Endothelial cell of umbilical vein (primary cell): ENCODE measurements at regions of chr13 and their contacts with region 1.

Region 1: DNA sequence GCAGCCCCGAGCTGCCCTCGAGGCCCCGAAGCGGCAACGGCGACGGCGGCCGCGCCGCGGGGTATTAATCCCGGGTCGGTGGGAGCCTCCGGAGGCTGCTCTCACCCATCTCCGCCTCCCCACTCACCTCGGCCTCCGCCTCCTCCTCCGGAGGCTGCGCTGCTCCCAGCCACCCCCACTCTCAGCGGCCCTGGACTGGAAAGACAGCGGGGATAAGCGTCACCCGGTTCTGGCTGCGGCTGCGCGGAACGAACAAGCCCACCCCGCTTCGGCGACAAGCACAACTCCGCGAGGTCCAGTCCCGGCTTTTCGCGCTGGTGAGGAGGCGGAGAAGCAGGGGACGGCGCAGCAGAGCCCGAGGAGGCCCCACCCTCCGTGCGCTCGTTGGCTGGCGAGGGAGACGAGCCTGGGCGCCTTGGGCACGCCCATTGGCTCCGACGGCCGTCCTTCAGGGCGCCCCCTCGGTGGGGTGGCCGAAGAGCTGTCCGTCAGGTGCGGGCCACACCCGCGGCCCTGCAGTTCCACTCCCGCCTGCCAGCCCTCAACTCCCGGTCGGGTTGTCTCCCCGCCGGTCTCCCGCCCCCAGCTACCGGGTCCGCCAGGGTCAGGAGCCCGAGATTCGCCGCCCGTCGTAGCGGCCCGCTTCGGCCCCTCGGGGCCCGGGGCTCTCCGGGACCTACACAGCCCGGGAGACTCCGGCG is at the start of gene ZMYM5:
- DNase-seq: peak; percentile 100
- H3K4me3 ChIP-seq: peak within 1 kb of the TSS; percentile 77 to 99 (median 91)
- H3K27ac ChIP-seq: peak within 1 kb of the TSS; percentile 81
- H3K4me1 ChIP-seq: peaks cover 30% of the 10 kb centered on the region
- H3K27me3 ChIP-seq: no peaks in the 10 kb centered on the region
- CTCF ChIP-seq: no peak
- POLR2A ChIP-seq: peak; percentile 21
- total RNA-seq, gene ZMYM5: 10.1 and 13.1 TPM in 2 replicates

Region 2: GRCh38 chr13:19633479-19634255 is 229.8 kb before region 1 on chr13 and contains the start of gene MPHOSPH8:
- CTCF ChIA-PET with region 1: interaction called, 3 read pairs
- POLR2A ChIA-PET with region 1: no interaction called
- dilution Hi-C with region 1: no loop called
- intact Hi-C with region 1: loop called (anchors 5 kb)
- DNase-seq: peak; percentile 96
- H3K4me3 ChIP-seq: peak within 1 kb of the TSS; percentile 76 to 93 (median 84)
- H3K27ac ChIP-seq: peak within 1 kb of the TSS; percentile 50
- H3K4me1 ChIP-seq: peaks cover 19% of the 10 kb centered on the region
- H3K27me3 ChIP-seq: no peaks in the 10 kb centered on the region
- CTCF ChIP-seq: no peak
- POLR2A ChIP-seq: no peak
- total RNA-seq, gene MPHOSPH8: 27.5 and 31.5 TPM in 2 replicates

Region 3: GRCh38 chr13:19673473-19674430 is 189.7 kb before region 1 on chr13:
- CTCF ChIA-PET with region 1: no interaction called
- POLR2A ChIA-PET with region 1: no interaction called
- dilution Hi-C with region 1: no loop called
- intact Hi-C with region 1: loop called (anchors 2 kb)
- DNase-seq: peak; percentile 26
- H3K4me3 ChIP-seq: no peak overlapping the region
- H3K27ac ChIP-seq: peak overlapping the region; percentile 12
- H3K4me1 ChIP-seq: peaks cover 22% of the 10 kb centered on the region
- H3K27me3 ChIP-seq: no peaks in the 10 kb centered on the region
- CTCF ChIP-seq: no peak
- POLR2A ChIP-seq: no peak

Region 4: DNA sequence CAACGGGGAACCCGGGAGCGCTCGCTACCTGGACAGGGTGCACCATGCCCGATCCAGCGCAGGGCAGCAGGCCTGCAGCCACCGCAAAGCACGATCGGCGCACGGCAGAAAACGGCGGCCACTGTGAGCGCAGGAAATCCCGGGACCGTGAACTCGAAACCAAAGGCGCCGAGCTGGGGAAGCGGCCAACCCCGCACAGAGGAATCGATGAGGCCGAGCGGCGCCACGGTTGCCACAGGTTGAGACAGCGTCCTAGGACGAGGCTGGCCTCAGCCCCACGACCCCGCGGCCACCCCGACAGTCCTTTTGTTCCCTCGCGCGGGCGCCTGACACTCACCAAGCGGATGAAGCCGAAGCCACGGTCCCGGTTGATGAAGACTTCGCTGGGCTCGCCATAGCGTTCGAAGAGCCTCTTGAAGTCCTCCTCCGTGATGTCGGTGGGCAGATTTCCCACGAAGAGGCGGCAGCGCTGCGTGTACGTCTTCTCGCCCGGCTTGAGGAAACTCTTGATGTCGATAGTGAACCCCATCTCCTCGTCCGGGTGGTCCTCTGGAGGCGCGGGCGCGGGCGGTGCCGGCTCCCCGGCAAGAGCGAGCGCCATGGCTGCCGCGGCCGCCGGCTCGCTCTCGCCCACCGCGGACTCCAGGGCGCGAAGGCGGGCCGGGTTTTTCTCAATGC is 81.3 kb before region 1 on chr13:
- CTCF ChIA-PET with region 1: no interaction called
- POLR2A ChIA-PET with region 1: interaction called, 6 read pairs
- dilution Hi-C with region 1: no loop called
- intact Hi-C with region 1: loop called (anchors 2 kb)
- DNase-seq: peak; percentile 75
- H3K4me3 ChIP-seq: peak overlapping the region; percentile 78 to 95 (median 93)
- H3K27ac ChIP-seq: peak overlapping the region; percentile 85
- H3K4me1 ChIP-seq: peaks cover 3% of the 10 kb centered on the region
- H3K27me3 ChIP-seq: no peaks in the 10 kb centered on the region
- CTCF ChIP-seq: no peak
- POLR2A ChIP-seq: no peak

Region 5: GRCh38 chr13:19845758-19846157 is 17.7 kb before region 1 on chr13:
- CTCF ChIA-PET with region 1: interaction called, 12 read pairs
- POLR2A ChIA-PET with region 1: interaction called, 14 read pairs
- dilution Hi-C with region 1: no loop called
- intact Hi-C with region 1: loop called (anchors 2 kb)
- DNase-seq: peak; percentile 62
- H3K4me3 ChIP-seq: no peak overlapping the region
- H3K27ac ChIP-seq: peak overlapping the region; percentile 9
- H3K4me1 ChIP-seq: peaks cover 7% of the 10 kb centered on the region
- H3K27me3 ChIP-seq: no peaks in the 10 kb centered on the region
- CTCF ChIP-seq: no peak
- POLR2A ChIP-seq: no peak

Region 6: GRCh38 chr13:19959831-19960652 is 96.6 kb after region 1 on chr13:
- CTCF ChIA-PET with region 1: interaction called, 3 read pairs
- POLR2A ChIA-PET with region 1: no interaction called
- dilution Hi-C with region 1: no loop called
- intact Hi-C with region 1: loop called (anchors 1 kb)
- DNase-seq: peak; percentile 91
- H3K4me3 ChIP-seq: peak overlapping the region; percentile 74 to 97 (median 97)
- H3K27ac ChIP-seq: peak overlapping the region; percentile 82
- H3K4me1 ChIP-seq: peaks cover 25% of the 10 kb centered on the region
- H3K27me3 ChIP-seq: peaks cover 3 to 10% of the 10 kb centered on the region in 2 experiments
- CTCF ChIP-seq: peak; percentile 70 to 75
- POLR2A ChIP-seq: no peak

Region 7: GRCh38 chr13:20160847-20161274 is 297.4 kb after region 1 on chr13 and contains the start of gene GJA3:
- CTCF ChIA-PET with region 1: no interaction called
- POLR2A ChIA-PET with region 1: no interaction called
- dilution Hi-C with region 1: no loop called
- intact Hi-C with region 1: loop called (anchors 5 kb)
- DNase-seq: no peak
- H3K4me3 ChIP-seq: peak within 1 kb of the TSS in 2 of 3 experiments; percentile 25 to 28
- H3K27ac ChIP-seq: no peak within 1 kb of the TSS
- H3K4me1 ChIP-seq: peaks cover 2% of the 10 kb centered on the region
- H3K27me3 ChIP-seq: peaks cover 40 to 71% of the 10 kb centered on the region in 2 experiments
- CTCF ChIP-seq: no peak
- POLR2A ChIP-seq: no peak
- total RNA-seq, gene GJA3: not detected in 2 replicates